ENCODE measurements at regions of chr11 and their contacts with region 1.

Region 1: DNA sequence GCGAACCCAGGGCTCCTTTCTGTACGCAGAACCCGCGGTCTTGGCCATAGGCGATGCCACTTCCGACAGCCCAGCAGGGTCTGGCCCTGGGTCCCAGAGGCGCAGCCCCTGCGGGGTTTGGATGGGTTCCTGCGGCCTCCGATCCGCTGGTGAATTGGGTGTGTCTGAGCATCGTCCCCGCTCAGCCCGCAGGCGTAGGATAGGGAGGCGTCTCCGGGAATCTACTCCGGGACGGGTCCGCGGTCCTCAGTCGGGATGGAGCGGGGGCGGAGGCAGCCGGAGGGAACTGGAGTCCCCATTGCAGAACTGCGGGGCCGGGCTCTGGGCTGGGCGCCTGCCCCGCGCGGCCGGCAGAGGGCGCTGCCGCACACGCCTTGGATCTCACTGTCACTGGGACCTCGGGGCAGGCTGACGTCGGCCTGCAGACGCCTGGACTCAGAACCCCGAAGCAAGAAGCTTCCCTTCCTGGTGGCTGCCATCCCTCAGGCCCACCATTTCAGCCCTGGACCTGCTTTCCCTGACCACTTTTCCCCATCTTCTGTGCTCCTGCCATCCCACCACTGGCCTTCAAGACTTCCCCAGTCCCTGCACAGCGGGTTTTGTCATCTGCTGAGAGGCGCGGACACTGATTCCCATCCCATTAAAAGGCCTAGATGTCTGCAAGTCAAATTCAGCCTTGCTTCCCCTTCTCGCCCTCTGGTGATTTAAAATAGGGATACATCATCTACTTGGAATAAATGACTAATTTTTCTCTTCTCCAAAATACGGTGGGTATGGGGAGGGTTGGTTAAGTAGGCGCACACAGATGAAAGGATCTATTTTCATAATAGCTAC is 38.3 kb upstream of the CREB3L1 start:
- DNase-seq: peak; percentile 94
- H3K4me3 ChIP-seq: peak overlapping the region; percentile 53 to 71
- H3K27ac ChIP-seq: peak overlapping the region in 1 of 2 experiments; percentile 81; a peak in 3 of 4 replicates
- H3K4me1 ChIP-seq: peaks cover 22 to 38% of the 10 kb centered on the region in 2 experiments
- H3K27me3 ChIP-seq: no peaks in the 10 kb centered on the region
- CTCF ChIP-seq: peak; percentile 91
- EP300 ChIP-seq: no peak
- RAD21 ChIP-seq: peak; percentile 92

Region 2: GRCh38 chr11:46009647-46010046 is 229.5 kb before region 1 on chr11:
- CTCF ChIA-PET with region 1: no interaction called
- POLR2A ChIA-PET with region 1: no interaction called
- DNase-seq: no peak
- H3K4me3 ChIP-seq: no peak overlapping the region
- H3K27ac ChIP-seq: no peak overlapping the region
- H3K4me1 ChIP-seq: no peaks in the 10 kb centered on the region; a peak in 1 of 4 replicates
- H3K27me3 ChIP-seq: no peaks in the 10 kb centered on the region
- CTCF ChIP-seq: no peak
- EP300 ChIP-seq: no peak
- RAD21 ChIP-seq: no peak

Region 3: DNA sequence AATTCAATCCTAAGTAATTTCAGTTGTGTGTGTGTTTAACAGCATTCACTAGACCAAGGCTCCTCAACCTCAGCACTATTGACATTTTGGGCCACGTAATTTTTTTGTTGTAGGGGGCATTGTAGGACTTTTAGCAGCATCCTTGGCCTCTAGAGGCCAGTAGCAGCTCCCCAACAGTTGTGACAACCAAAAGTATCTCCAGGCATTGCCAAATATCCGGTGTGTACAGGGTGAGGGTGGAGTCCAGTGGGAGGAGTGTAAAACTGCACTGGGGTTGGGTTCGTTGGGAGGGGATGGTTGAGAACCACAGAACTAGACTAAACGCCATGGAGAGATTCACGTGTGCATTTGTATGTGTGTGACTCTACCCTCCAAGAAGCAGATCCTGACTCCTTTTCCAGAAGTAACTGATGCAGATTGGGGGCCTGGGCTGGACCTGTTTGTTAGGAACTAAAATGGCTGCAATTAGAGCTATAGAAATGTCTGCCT is 112.0 kb before region 1 on chr11:
- CTCF ChIA-PET with region 1: interaction called, 13 read pairs
- POLR2A ChIA-PET with region 1: interaction called, 5 read pairs
- DNase-seq: peak; percentile 39
- H3K4me3 ChIP-seq: no peak overlapping the region
- H3K27ac ChIP-seq: no peak overlapping the region
- H3K4me1 ChIP-seq: peaks cover 6 to 8% of the 10 kb centered on the region in 2 experiments; a peak in 3 of 4 replicates
- H3K27me3 ChIP-seq: no peaks in the 10 kb centered on the region
- CTCF ChIP-seq: peak; percentile 33; the same call in 1 of the 2 replicates
- EP300 ChIP-seq: no peak
- RAD21 ChIP-seq: peak; percentile 9; the same call in 1 of the 2 replicates

Region 4: DNA sequence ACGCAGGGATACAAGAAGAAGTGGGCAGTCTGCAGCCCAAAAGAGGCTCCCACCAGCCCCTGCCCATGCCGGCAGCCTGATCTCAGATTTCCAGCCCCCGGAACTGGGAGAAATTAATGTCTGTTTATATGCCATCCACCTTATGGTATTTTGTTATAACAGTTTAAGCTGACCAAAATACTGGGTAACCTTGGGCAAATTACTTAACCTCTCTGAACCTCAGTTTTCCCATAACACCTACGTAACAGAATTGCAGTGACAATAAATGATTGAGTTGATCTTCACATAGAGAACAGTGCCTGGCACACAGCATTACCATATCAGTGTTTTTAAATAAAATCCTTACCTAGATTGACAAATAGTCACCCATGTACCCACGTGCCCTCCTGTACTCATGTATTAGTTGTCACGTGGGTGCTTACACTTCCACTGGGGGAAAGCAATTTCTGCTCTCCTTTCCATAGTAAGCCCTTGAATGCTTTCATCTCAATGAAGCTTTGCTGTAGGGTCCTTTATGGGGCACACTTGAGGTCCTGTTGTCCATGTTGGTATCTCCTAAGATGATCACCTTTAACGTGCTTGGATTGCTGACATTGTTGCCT is 63.7 kb before region 1 on chr11:
- CTCF ChIA-PET with region 1: no interaction called
- POLR2A ChIA-PET with region 1: no interaction called
- DNase-seq: no peak
- H3K4me3 ChIP-seq: no peak overlapping the region
- H3K27ac ChIP-seq: no peak overlapping the region
- H3K4me1 ChIP-seq: no peaks in the 10 kb centered on the region
- H3K27me3 ChIP-seq: no peaks in the 10 kb centered on the region; the same call in 1 of the 2 replicates
- CTCF ChIP-seq: no peak
- EP300 ChIP-seq: no peak
- RAD21 ChIP-seq: no peak

Region 5: GRCh38 chr11:46249103-46249937 is 10.1 kb after region 1 on chr11:
- CTCF ChIA-PET with region 1: interaction called, 11 read pairs
- POLR2A ChIA-PET with region 1: no interaction called
- DNase-seq: no peak
- H3K4me3 ChIP-seq: no peak overlapping the region
- H3K27ac ChIP-seq: peak overlapping the region; percentile 3 to 100; a peak in 3 of 4 replicates
- H3K4me1 ChIP-seq: peaks cover 5 to 47% of the 10 kb centered on the region in 2 experiments; a peak in 3 of 4 replicates
- H3K27me3 ChIP-seq: no peaks in the 10 kb centered on the region
- CTCF ChIP-seq: no peak
- EP300 ChIP-seq: no peak
- RAD21 ChIP-seq: no peak

Region 6: DNA sequence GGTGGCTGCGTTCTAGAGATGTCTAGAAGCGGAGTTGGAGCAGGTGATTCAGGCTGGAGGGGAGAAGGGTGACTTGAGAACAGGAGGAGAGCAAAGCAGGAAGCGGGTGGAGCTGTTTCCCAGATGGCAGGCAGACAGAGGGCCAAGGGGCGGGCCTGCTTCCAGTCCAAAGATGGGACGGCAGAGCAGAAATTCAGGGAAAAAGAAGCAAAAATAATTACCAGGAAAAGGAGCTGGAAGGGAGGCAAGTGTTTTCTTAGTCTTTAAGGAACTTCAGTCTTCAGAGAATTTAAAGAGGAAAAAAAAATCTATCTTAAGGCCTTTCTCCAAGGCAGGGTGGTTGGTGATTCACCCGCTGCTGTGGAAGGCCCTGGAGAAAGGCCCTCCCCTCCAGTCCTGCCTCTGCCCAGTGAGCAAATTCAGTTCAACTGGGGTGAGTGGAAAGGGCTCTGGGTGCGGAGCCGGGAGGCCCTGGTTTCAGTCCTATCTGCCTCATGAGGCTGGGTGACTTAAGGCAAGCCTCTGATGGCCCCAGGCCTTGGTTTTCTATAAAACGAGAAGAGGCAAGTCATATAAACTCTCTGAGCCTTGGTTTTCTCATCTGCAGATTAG is 33.7 kb after region 1 on chr11:
- CTCF ChIA-PET with region 1: interaction called, 36 read pairs
- POLR2A ChIA-PET with region 1: interaction called, 8 read pairs
- DNase-seq: no peak
- H3K4me3 ChIP-seq: no peak overlapping the region
- H3K27ac ChIP-seq: peak overlapping the region; percentile 63 to 77; a peak in 3 of 4 replicates
- H3K4me1 ChIP-seq: peaks cover 18 to 26% of the 10 kb centered on the region in 2 experiments; a peak in 3 of 4 replicates
- H3K27me3 ChIP-seq: no peaks in the 10 kb centered on the region
- CTCF ChIP-seq: no peak
- EP300 ChIP-seq: no peak
- RAD21 ChIP-seq: no peak

Region 7: DNA sequence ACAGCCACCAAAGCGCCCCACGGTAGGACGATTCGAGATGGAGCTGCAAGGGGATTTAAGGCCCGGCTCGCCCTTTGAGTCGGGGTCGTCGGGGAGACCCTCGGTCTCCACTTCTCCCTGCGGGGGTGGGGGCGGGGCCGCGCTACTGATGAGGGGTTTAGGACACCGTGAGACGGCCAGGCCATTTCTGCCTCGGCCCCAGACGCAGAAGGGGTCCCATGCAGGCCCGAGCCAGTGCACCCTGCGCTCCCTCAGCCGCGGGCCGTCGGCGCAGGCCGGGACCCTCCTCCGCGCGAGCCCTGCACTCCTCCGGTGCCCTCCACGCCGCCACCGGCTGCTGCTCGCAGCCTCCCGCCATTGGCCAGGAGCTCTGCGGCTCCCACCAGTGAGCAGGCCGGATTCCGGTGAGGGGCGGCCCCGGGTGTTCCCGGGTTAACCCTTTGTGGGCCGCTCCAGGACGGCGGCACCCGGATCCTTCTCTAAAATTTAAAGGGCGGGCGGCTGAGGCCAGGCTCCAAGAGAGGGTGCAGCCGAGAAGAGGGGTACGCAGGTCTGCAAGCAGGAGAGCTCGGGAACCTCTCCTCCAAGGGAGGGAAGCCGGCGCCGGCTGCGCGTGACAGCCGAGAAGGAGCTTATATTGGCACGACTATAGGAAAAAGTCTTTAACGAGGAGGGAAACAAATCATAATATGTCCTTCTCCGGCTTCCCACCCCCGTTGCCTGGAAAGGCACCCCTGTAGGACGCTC is 56.3 kb after region 1 on chr11:
- CTCF ChIA-PET with region 1: interaction called, 36 read pairs
- POLR2A ChIA-PET with region 1: interaction called, 11 read pairs
- DNase-seq: peak; percentile 99
- H3K4me3 ChIP-seq: peak overlapping the region; percentile 59 to 65
- H3K27ac ChIP-seq: peak overlapping the region; percentile 84 to 95
- H3K4me1 ChIP-seq: peaks cover 18 to 63% of the 10 kb centered on the region in 2 experiments
- H3K27me3 ChIP-seq: no peaks in the 10 kb centered on the region
- CTCF ChIP-seq: no peak
- EP300 ChIP-seq: peak in 1 of 2 experiments; percentile 15; a peak in 1 of 4 replicates
- RAD21 ChIP-seq: no peak

Region 8: DNA sequence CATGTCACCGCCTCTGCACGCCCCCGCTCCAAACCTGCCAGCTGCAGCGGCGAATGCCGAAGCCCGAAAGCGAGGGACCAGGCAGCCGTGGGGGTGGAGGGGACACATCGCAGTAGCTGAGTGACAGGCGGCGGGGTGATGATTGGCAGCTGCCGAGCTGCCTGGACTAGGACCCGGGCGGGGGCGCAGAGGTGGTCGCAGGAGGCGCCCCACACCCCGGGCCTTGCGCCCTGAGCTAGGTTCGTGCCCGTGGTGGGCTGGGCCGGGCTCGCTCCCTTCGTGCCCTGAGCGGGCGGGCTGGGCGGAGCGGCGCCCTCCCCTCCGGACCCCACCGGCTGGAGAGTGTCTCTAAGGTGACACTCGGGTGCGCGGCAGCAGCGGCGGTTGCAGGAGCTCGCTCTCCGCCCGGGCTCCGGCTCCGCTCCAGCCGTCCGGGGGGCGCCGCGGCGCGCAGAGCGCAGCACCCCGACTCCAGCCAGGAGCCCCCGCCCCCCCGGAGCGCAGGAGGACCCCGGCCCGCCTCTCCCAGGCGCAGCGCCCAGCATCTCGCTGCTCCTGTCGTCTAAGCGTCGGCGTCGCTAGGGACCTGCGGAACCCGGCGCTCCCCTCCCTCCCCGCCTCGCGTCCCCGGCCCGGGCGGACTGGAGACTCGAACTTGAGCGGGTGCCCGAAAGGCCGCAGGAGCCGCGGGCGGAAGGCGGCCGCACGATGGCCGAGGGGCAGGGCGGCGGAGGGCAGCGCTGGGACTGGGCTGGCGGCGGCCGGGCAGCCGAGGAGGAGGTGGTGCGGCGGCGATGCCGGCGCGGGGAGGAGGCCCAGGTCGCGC is 93.6 kb after region 1 on chr11:
- CTCF ChIA-PET with region 1: interaction called, 14 read pairs
- POLR2A ChIA-PET with region 1: interaction called, 3 read pairs
- DNase-seq: peak; percentile 80
- H3K4me3 ChIP-seq: peak overlapping the region; percentile 3 to 41; a peak in 2 of 4 replicates
- H3K27ac ChIP-seq: no peak overlapping the region
- H3K4me1 ChIP-seq: peaks cover 7 to 15% of the 10 kb centered on the region in 2 experiments; a peak in 2 of 4 replicates
- H3K27me3 ChIP-seq: peaks cover 10% of the 10 kb centered on the region
- CTCF ChIP-seq: no peak
- EP300 ChIP-seq: no peak
- RAD21 ChIP-seq: no peak

Measured in SK-N-SH (cell line).